Posterior cingulate gyrus (tissue), 11 donors: ENCODE measurements at regions of chr11 and their contacts with region 1.

Region 1: DNA sequence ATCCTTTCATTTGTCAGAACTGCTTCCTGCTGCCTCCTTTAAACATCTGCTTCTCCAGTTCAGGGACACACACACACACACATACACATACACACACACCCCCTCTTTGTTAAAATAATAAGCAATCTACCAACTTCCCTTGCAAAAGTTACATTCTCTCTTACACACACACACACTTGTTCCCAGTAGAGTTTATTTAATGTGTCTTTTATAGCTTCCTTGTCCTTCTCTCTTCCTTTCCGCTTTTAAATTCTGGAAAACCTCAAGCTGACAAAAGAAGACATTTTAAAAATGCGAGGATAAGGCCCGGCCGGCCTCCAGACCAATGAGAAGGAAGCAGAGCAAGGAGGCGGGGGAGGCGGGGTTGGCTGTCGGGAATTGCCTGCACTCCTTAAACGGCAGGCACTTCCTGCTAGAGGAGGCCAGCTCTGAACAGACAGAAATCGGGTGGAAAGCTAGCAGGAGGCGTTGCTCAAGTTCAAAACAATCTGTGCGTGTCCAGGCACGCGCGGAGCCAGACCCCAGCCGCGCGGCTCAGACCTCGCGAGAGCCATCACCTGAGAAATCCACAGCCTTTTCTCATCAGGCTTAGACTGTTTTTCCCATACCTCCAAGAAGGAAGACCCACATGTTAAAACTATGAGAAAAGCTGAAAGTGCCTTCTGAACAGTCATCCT is 99.9 kb downstream of the MAML2 start:
- DNase-seq: peak; percentile 69 to 98 (median 84)

Region 2: GRCh38 chr11:96054870-96055705 is 188.0 kb before region 1 on chr11:
- intact Hi-C with region 1: no loop called
- DNase-seq: no peak

Region 3: DNA sequence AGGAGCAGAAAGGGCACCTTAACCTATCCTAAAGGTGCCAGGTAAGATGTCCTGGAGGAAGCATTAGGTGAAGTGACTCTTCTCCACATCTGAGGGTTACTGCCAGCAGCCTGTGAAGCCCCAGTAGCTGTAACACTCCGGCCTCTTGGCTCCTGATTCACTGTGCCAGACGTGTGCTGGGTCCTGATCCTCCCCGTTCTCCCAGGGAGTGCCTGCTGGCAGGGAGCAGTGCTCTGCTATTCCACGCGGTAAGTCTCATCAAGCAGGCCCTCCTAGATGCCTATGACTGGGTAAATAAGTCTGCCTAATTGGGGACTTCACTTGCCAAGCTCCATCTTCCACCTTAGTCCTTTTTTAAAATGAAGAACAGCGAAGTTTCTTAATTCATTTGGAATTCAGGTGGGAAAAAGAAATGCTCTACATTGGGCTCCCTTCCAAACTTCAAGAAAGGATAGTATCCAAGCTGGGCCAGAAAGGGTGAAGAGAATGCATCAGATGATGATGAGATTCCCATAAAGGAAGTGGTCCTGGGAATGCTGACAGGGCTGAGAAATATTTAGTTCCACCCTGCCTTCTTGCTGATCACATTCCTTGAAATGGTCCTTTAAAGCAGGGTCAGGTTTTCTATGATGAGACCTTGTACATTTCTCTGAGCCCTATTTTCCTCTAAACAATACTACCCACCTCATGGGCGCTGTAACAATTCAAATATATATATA is 88.1 kb before region 1 on chr11:
- intact Hi-C with region 1: loop called (anchors 5 kb)
- DNase-seq: peak in 5 of 10 donors; percentile 13 to 80 (median 36)

Region 4: GRCh38 chr11:96267496-96268032 is 24.5 kb after region 1 on chr11:
- intact Hi-C with region 1: no loop called
- DNase-seq: no peak

Region 5: DNA sequence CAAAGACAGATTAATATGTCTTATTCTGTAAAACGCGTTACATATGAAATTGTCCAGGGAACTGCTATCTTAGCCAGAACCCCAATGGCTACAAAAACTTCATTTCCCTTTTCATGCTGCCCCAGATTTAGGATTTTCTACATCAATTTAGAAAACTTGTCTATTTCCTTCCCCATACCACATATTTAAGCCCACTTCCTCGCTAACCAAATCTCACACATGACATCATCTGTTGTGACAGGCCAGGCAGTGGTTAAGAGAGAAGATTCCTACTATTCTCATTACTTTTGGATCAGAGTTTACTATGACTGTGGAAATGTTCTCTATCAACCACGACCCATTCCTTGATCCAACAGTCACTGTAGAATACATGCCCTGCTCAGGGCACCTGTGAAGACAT is 130.7 kb after region 1 on chr11:
- intact Hi-C with region 1: no loop called
- DNase-seq: no peak